Mammary epithelial cell (primary cell): ENCODE measurements at regions of chr4 and their contacts with region 1.

Region 1: DNA sequence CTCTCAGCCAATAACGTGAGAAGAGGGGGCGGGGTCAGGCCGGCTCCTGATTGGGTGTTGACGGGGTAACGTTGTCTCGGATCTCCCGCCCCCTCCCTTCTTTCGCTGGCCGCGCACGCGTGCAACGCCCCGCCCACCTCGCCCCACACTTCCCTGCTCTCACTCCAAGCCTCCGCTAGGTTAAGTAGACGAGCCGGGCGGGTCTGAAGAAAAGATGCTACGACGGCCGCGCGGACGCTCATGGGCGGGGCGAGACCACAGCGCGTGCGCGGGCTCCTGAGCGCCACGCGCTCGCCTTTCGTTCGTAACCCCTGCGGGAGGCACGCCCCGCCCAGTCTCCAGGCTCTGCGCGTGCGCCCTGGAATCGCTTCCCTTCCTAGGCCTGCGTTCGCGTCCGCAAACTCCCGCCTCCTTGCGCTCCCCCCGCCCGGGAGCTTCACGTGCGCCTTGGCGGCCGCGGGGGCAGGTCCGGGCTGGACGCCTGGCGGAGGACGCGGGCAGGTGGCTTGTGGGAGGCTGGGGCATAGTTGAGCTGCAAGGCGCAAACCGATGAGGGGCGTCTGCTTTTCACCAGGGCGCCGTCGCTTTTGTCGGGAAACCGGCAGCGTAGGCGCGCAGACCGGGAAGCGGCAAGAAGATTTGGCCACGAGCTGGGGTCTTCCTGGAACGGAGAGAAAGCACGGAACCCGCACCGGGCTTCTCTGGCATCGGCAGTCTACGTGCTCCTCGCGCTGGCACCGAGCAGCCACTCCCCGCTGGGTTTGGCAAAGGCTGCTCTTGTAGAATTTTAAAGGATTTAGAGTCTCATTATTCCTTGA is 467 bp upstream of the PGRMC2 start:
- DNase-seq: peak; percentile 99
- H3K4me3 ChIP-seq: peak overlapping the region; percentile 55 to 84 (median 62)
- H3K27ac ChIP-seq: peak overlapping the region; percentile 86
- H3K4me1 ChIP-seq: peaks cover 7% of the 10 kb centered on the region
- H3K27me3 ChIP-seq: no peaks in the 10 kb centered on the region
- CTCF ChIP-seq: peak in 1 of 2 donors; percentile 38

Region 2: DNA sequence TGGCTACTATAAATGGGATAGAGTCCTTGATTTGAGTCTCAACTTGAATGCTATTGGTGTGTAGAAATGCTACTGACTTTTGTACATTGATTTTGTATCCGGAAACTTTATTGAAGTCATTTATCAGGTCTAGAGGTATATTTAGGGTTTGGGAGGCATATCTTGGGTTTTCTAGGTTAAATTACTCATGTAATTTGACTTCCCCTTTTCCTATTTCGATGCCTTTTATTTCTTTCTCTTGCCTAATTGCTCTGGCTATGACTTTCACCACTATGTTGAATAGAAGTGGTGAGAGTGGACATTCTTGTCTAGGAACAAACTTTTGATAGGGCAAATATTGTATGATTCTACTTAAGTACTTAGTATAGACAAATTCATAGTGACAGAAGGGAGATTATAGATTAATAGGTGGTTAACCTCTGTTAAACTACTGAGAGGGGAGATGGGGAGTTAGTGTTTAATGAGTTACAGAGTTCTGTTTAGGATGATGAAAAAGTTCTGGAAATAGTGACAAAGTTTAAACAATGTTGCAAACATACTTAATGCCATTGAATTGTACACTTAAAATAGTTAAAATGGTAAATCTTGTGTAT is 528.8 kb before region 1 on chr4:
- CTCF ChIA-PET with region 1: interaction called, 11 read pairs
- dilution Hi-C with region 1: no loop called
- in situ Hi-C with region 1: no loop called
- intact Hi-C with region 1: no loop called
- DNase-seq: no peak
- H3K4me3 ChIP-seq: no peak overlapping the region
- H3K27ac ChIP-seq: no peak overlapping the region
- H3K4me1 ChIP-seq: no peaks in the 10 kb centered on the region
- H3K27me3 ChIP-seq: no peaks in the 10 kb centered on the region
- CTCF ChIP-seq: no peak

Region 3: GRCh38 chr4:127965062-127965802 is 322.8 kb before region 1 on chr4 and contains the starts of genes ABHD18 and MFSD8:
- CTCF ChIA-PET with region 1: no interaction called
- dilution Hi-C with region 1: no loop called
- in situ Hi-C with region 1: no loop called
- intact Hi-C with region 1: loop called (anchors 10 kb)
- DNase-seq: peak; percentile 99
- H3K4me3 ChIP-seq: peak within 1 kb of the TSS; percentile 60 to 97 (median 88)
- H3K27ac ChIP-seq: peak within 1 kb of the TSS; percentile 87
- H3K4me1 ChIP-seq: peaks cover 10% of the 10 kb centered on the region
- H3K27me3 ChIP-seq: no peaks in the 10 kb centered on the region
- CTCF ChIP-seq: peak in 1 of 2 donors; percentile 58
- total RNA-seq, gene ABHD18: 6.3 to 7.7 TPM
- total RNA-seq, gene MFSD8: 23.3 to 28.0 TPM

Region 4: DNA sequence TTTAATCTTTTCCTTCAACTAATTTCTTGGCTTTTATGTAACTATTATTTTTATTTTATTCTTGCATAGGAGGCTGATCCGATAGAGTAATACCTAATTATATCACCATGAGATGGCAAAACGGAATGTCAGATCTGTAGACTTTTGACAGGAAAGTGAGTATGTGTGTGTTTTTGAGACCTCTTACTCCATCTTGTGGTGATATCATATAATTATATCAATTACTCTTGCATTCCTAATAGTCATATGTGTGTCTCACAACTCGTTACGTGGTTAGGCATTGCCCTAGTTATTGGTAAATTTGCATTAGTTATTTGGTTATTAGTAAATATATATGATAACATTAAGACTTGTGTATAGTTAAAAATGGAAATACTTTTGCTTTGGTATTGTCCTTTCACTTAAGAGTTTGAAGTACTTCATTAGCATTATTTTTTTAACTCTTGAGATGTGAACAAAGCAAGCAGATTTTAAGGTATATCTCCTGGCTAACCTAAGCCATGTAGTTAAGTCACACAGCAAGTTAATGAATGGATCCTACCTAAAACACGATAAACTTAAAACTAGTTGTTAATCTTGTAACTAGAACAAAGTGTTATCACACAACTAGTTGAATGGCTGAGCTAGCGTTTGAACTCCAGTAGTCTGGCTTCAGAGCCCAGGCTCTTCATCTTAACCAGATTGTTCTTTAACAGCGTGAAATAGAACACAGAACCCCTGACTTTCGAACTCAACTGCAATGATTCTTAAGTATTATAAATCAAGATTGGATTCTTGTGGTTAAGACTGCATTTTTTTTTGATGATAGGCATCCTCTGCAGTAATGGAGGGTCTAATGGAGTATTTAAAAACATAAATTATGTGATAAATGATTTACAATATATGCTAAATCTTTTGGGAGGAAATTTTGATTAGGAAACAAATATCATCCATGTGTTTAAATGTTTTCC is 67.5 kb before region 1 on chr4:
- CTCF ChIA-PET with region 1: interaction called, 3 read pairs
- dilution Hi-C with region 1: no loop called
- in situ Hi-C with region 1: no loop called
- intact Hi-C with region 1: loop called (anchors 5 kb)
- DNase-seq: peak; percentile 42
- H3K4me3 ChIP-seq: no peak overlapping the region
- H3K27ac ChIP-seq: no peak overlapping the region
- H3K4me1 ChIP-seq: peaks cover 6% of the 10 kb centered on the region
- H3K27me3 ChIP-seq: no peaks in the 10 kb centered on the region
- CTCF ChIP-seq: peak; percentile 23 to 39

Region 5: DNA sequence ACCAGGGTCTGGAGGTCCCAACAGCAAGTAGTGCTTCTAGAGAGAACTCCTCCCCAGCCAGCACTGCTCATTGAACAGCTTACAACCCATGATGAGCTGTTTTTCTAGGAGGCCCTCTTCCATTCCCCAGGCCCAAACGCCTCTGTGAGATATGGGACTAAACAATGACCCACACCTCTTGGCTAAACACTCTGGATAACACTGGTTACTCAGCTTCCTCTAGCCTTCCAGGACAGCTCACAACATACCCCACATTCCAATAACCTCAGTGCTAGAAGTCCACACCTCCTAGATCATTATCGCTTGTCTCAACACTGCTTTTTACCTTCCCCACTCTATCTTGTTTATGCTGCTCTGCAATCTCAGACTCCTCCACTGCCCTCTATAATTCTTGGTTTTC is 34.9 kb after region 1 on chr4:
- CTCF ChIA-PET with region 1: no interaction called
- dilution Hi-C with region 1: no loop called
- in situ Hi-C with region 1: no loop called
- intact Hi-C with region 1: loop called (anchors 2 kb)
- DNase-seq: peak; percentile 85
- H3K4me3 ChIP-seq: no peak overlapping the region
- H3K27ac ChIP-seq: peak overlapping the region; percentile 65
- H3K4me1 ChIP-seq: peaks cover 33% of the 10 kb centered on the region
- H3K27me3 ChIP-seq: no peaks in the 10 kb centered on the region
- CTCF ChIP-seq: no peak

Region 6: GRCh38 chr4:128378668-128379067 is 90.6 kb after region 1 on chr4:
- CTCF ChIA-PET with region 1: no interaction called
- dilution Hi-C with region 1: no loop called
- in situ Hi-C with region 1: no loop called
- intact Hi-C with region 1: no loop called
- DNase-seq: no peak
- H3K4me3 ChIP-seq: no peak overlapping the region
- H3K27ac ChIP-seq: no peak overlapping the region
- H3K4me1 ChIP-seq: peaks cover 9% of the 10 kb centered on the region
- H3K27me3 ChIP-seq: no peaks in the 10 kb centered on the region
- CTCF ChIP-seq: no peak

Region 7: GRCh38 chr4:128427832-128428366 is 139.8 kb after region 1 on chr4:
- CTCF ChIA-PET with region 1: interaction called, 4 read pairs
- dilution Hi-C with region 1: no loop called
- in situ Hi-C with region 1: no loop called
- intact Hi-C with region 1: loop called (anchors 1 kb)
- DNase-seq: peak; percentile 81
- H3K4me3 ChIP-seq: peak overlapping the region in 2 of 3 experiments; percentile 8 to 49
- H3K27ac ChIP-seq: peak overlapping the region; percentile 19
- H3K4me1 ChIP-seq: peaks cover 20% of the 10 kb centered on the region
- H3K27me3 ChIP-seq: no peaks in the 10 kb centered on the region
- CTCF ChIP-seq: peak; percentile 63 to 72

Region 8: GRCh38 chr4:128444544-128445302 is 156.6 kb after region 1 on chr4:
- CTCF ChIA-PET with region 1: no interaction called
- dilution Hi-C with region 1: no loop called
- in situ Hi-C with region 1: no loop called
- intact Hi-C with region 1: no loop called
- DNase-seq: no peak
- H3K4me3 ChIP-seq: no peak overlapping the region
- H3K27ac ChIP-seq: no peak overlapping the region
- H3K4me1 ChIP-seq: no peaks in the 10 kb centered on the region
- H3K27me3 ChIP-seq: no peaks in the 10 kb centered on the region
- CTCF ChIP-seq: no peak